ENCODE measurements at regions of chr1 and their contacts with region 1.

Region 1: GRCh38 chr1:184982002-184982954 is 8.0 kb upstream of the NIBAN1 start:
- DNase-seq: peak; percentile 60
- H3K4me3 Mint-ChIP-seq: no peak overlapping the region
- H3K27ac Mint-ChIP-seq: no peak overlapping the region
- H3K4me1 Mint-ChIP-seq: peaks cover 11% of the 10 kb centered on the region
- H3K27me3 Mint-ChIP-seq: peaks cover 46% of the 10 kb centered on the region

Region 2: GRCh38 chr1:184827600-184828368 is 154.5 kb before region 1 on chr1:
- intact Hi-C with region 1: no loop called
- DNase-seq: no peak
- H3K4me3 Mint-ChIP-seq: no peak overlapping the region
- H3K27ac Mint-ChIP-seq: no peak overlapping the region
- H3K4me1 Mint-ChIP-seq: peaks cover 17% of the 10 kb centered on the region
- H3K27me3 Mint-ChIP-seq: no peaks in the 10 kb centered on the region

Region 3: GRCh38 chr1:185008838-185009237 is 26.6 kb after region 1 on chr1:
- intact Hi-C with region 1: no loop called
- DNase-seq: no peak
- H3K4me3 Mint-ChIP-seq: no peak overlapping the region
- H3K27ac Mint-ChIP-seq: no peak overlapping the region
- H3K4me1 Mint-ChIP-seq: no peaks in the 10 kb centered on the region
- H3K27me3 Mint-ChIP-seq: no peaks in the 10 kb centered on the region

Region 4: GRCh38 chr1:185170291-185170848 is 188.1 kb after region 1 on chr1:
- intact Hi-C with region 1: loop called (anchors 5 kb)
- DNase-seq: peak; percentile 32
- H3K4me3 Mint-ChIP-seq: no peak overlapping the region
- H3K27ac Mint-ChIP-seq: no peak overlapping the region
- H3K4me1 Mint-ChIP-seq: peaks cover 10% of the 10 kb centered on the region
- H3K27me3 Mint-ChIP-seq: no peaks in the 10 kb centered on the region

Region 5: DNA sequence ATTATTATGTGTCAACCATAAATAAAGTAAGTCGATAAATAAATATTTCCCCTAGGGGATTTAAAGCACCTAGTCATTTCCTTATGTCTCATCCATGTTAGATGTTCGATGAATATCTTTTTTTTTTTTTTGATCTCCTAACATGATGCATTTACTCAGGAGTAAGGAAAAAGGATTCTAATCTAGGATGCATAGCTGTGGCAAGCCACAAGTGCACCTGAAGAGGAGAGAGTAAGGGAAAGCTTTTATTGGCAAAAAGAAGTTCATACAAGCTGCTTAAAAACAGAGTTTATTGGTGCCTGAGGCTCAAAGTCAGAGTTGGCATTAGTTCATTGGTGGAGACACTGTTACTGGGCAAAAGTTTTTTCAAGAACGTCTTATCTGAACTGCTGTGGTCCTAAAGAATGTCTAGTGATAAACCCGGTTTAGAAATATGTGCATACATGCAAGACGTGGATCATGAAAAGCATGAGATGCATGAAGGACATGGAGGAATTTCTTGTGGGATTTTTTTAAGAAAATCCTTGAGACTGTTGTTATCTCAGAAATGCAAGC is 226.4 kb after region 1 on chr1:
- intact Hi-C with region 1: no loop called
- DNase-seq: no peak
- H3K4me3 Mint-ChIP-seq: no peak overlapping the region
- H3K27ac Mint-ChIP-seq: no peak overlapping the region
- H3K4me1 Mint-ChIP-seq: peaks cover 7% of the 10 kb centered on the region
- H3K27me3 Mint-ChIP-seq: no peaks in the 10 kb centered on the region